OCI-LY7 (cell line): ENCODE measurements at regions of chr3 and their contacts with region 1.

Region 1: GRCh38 chr3:124174910-124175874 is 183.3 kb upstream of the ROPN1 start:
- DNase-seq: no peak
- H3K4me3 ChIP-seq: no peak overlapping the region
- H3K27ac ChIP-seq: no peak overlapping the region
- H3K4me1 ChIP-seq: no peaks in the 10 kb centered on the region
- CTCF ChIP-seq: no peak

Region 2: DNA sequence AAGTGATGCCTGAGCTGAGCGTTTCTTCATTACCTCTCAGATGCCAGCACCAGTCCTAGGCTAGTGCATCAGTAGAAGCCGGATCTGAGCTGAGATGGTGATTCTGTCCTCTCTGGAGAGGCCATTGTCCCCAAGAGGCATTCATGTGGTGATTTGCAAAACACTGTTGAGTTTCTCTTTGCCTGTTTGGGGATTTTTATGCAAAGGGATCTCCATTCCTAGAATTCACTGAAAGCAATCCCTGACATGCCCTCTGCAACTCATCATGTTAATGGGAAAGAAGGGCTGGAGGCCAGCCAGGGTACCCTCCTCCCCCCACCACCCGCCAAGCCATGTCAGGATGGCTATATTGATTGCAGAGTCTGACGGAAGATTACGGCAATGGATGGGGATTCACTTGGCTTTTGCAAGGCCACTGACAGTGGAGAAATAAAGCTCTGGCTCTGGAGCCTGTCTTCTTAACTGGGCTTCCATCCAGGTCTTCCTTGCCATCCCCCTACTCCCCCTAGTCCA is 16.8 kb before region 1 on chr3:
- CTCF ChIA-PET with region 1: no interaction called
- POLR2A ChIA-PET with region 1: no interaction called
- intact Hi-C with region 1: no loop called
- DNase-seq: no peak
- H3K4me3 ChIP-seq: no peak overlapping the region
- H3K27ac ChIP-seq: no peak overlapping the region
- H3K4me1 ChIP-seq: no peaks in the 10 kb centered on the region
- CTCF ChIP-seq: no peak

Region 3: GRCh38 chr3:125062888-125063618 is 887.9 kb after region 1 on chr3:
- CTCF ChIA-PET with region 1: interaction called, 18 read pairs
- POLR2A ChIA-PET with region 1: no interaction called
- intact Hi-C with region 1: no loop called
- DNase-seq: no peak
- H3K4me3 ChIP-seq: no peak overlapping the region
- H3K27ac ChIP-seq: no peak overlapping the region
- H3K4me1 ChIP-seq: no peaks in the 10 kb centered on the region
- CTCF ChIP-seq: no peak